AG04450 (cell line): ENCODE measurements at regions of chr19 and their contacts with region 1.

Region 1: GRCh38 chr19:31338069-31338776 is 11.0 kb downstream of the TSHZ3 start:
- DNase-seq: no peak
- H3K4me3 ChIP-seq: no peak overlapping the region; the same call in 1 of the 2 replicates
- H3K27ac ChIP-seq: peak overlapping the region; percentile 83
- H3K27me3 ChIP-seq: no peaks in the 10 kb centered on the region
- CTCF ChIP-seq: peak; percentile 85

Region 2: DNA sequence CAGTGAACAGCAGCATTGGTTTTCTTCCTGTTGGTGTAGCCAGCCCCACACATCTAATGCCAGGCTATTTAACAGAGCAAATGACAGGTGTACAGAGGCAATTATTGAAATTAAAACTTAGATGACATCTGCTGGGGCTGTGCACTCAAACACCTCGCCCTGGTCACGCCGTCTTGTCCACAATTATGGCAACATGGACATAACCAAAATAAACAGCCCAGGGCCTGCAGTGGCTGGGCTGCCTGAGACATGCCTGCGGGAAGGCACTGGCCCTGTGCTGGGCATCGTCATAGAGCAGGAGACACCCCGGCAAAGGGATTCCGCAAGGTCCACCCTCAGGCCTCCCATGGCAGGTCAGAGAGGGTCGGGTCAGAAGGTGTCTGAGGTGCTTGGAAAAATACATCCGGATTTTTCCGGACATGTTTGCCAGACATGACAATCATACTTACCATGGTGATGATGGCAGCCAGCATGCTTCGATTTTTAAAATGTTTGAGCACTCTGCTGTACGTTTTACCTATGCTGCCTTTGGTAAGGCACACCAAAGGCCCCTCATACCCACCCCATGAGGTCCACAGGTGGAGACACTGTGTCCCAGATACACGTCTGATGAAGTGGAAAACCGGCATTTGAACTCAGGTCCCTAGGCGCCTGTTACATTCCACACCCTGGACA is 36.8 kb before region 1 on chr19:
- CTCF ChIA-PET with region 1: interaction called, 10 read pairs
- POLR2A ChIA-PET with region 1: no interaction called
- DNase-seq: no peak
- H3K4me3 ChIP-seq: no peak overlapping the region
- H3K27ac ChIP-seq: peak overlapping the region; percentile 2
- H3K27me3 ChIP-seq: no peaks in the 10 kb centered on the region
- CTCF ChIP-seq: no peak

Region 3: DNA sequence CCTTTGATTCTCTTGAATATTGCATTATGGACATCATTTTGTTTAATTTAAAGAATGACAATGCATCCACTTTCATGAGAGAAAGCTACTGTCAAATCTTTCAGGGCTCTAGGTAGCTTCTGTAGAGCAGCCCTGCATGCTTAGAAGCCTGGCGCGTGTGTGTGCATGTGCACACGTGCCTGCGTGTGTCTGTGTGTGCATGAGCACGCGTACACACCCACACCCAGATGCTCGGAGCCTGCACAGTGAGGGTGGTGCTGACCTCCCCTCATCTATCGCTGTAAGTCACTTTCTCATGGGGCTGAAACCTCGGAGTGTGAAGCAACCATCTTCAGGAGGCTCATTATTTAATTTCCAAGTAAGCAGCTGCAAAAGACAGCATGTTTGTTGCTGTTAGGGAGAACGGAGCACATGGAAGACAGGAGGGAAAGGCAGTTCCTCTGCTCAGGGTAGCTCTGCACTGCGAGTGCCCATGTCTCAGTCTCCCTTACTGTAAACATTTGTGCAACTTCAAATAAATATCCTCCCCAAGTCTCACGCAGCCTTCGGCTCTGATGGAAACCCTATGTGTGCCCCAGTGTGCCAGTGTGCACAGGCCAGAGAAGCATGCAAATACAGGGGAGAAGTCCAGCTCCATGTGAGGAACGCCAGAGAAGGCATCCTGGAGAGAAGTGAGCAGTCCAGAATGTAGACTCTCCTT is 11.7 kb before region 1 on chr19:
- CTCF ChIA-PET with region 1: interaction called, 28 read pairs
- POLR2A ChIA-PET with region 1: interaction called, 13 read pairs
- DNase-seq: no peak
- H3K4me3 ChIP-seq: peak overlapping the region; percentile 34
- H3K27ac ChIP-seq: peak overlapping the region; percentile 53
- H3K27me3 ChIP-seq: no peaks in the 10 kb centered on the region
- CTCF ChIP-seq: no peak

Region 4: GRCh38 chr19:31348481-31349159 is 10.4 kb after region 1 on chr19:
- CTCF ChIA-PET with region 1: interaction called, 15 read pairs
- POLR2A ChIA-PET with region 1: interaction called, 5 read pairs
- DNase-seq: no peak
- H3K4me3 ChIP-seq: peak overlapping the region; percentile 88
- H3K27ac ChIP-seq: peak overlapping the region; percentile 70
- H3K27me3 ChIP-seq: no peaks in the 10 kb centered on the region
- CTCF ChIP-seq: no peak

Region 5: GRCh38 chr19:31448221-31448657 is 110.0 kb after region 1 on chr19:
- CTCF ChIA-PET with region 1: no interaction called
- POLR2A ChIA-PET with region 1: no interaction called
- DNase-seq: peak; percentile 89
- H3K4me3 ChIP-seq: no peak overlapping the region
- H3K27ac ChIP-seq: peak overlapping the region; percentile 55
- H3K27me3 ChIP-seq: no peaks in the 10 kb centered on the region
- CTCF ChIP-seq: 0 out of 2 replicates have a peak, but pooled peaks have one; percentile 12